Common myeloid progenitor, CD34-positive (primary cell): ENCODE measurements at regions of chr1 and their contacts with region 1.

Region 1: GRCh38 chr1:24635195-24635843 is 7.8 kb upstream of the SRRM1 start:
- DNase-seq: peak; percentile 72 to 77 (median 75)
- H3K4me3 ChIP-seq: no peak overlapping the region
- H3K27ac ChIP-seq: no peak overlapping the region
- H3K4me1 ChIP-seq: peaks cover 0 to 8% (median 4%) of the 10 kb centered on the region in 4 experiments
- H3K27me3 ChIP-seq: no peaks in the 10 kb centered on the region

Region 2: GRCh38 chr1:24594154-24594553 is 41.2 kb before region 1 on chr1:
- CTCF ChIA-PET with region 1: interaction called, 25 read pairs
- POLR2A ChIA-PET with region 1: no interaction called
- DNase-seq: no peak
- H3K4me3 ChIP-seq: no peak overlapping the region
- H3K27ac ChIP-seq: no peak overlapping the region
- H3K4me1 ChIP-seq: no peaks in the 10 kb centered on the region
- H3K27me3 ChIP-seq: no peaks in the 10 kb centered on the region

Region 3: DNA sequence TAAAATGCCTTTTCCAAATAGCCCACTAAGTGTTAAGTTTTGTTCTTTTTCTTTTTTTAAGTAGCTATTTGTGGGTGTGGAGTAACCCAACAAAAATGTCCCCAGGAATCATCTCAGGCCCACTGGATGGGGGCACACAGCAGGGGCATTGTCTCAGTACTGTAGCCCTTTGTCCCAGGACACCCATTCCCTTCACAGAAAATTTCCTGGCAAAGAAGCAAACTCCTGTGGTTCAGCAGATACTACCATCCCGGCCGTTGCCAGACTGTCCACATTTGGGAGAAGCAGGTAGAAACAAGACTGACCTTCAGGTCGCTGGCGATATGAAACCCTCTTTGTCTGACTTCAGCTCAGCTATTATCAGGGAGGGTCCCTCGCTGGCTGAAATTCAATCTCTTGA is 15.9 kb before region 1 on chr1:
- CTCF ChIA-PET with region 1: interaction called, 3 read pairs
- POLR2A ChIA-PET with region 1: interaction called, 14 read pairs
- DNase-seq: no peak
- H3K4me3 ChIP-seq: no peak overlapping the region
- H3K27ac ChIP-seq: no peak overlapping the region
- H3K4me1 ChIP-seq: no peaks in the 10 kb centered on the region
- H3K27me3 ChIP-seq: peaks cover 0 to 3% (median 0%) of the 10 kb centered on the region in 5 experiments